ENCODE measurements at regions of chr6 and their contacts with region 1.

Region 1: GRCh38 chr6:136289579-136290409 is at the start of gene BCLAF1:
- DNase-seq: peak; percentile 98
- ATAC-seq: peak; percentile 80
- H3K4me3 Mint-ChIP-seq: peak within 1 kb of the TSS; percentile 100
- H3K27ac Mint-ChIP-seq: peak within 1 kb of the TSS; percentile 100
- H3K4me1 Mint-ChIP-seq: peaks cover 49% of the 10 kb centered on the region
- H3K27me3 Mint-ChIP-seq: no peaks in the 10 kb centered on the region
- CTCF ChIP-seq: no peak
- total RNA-seq, gene BCLAF1: 253 and 259 TPM in 2 replicates

Region 2: DNA sequence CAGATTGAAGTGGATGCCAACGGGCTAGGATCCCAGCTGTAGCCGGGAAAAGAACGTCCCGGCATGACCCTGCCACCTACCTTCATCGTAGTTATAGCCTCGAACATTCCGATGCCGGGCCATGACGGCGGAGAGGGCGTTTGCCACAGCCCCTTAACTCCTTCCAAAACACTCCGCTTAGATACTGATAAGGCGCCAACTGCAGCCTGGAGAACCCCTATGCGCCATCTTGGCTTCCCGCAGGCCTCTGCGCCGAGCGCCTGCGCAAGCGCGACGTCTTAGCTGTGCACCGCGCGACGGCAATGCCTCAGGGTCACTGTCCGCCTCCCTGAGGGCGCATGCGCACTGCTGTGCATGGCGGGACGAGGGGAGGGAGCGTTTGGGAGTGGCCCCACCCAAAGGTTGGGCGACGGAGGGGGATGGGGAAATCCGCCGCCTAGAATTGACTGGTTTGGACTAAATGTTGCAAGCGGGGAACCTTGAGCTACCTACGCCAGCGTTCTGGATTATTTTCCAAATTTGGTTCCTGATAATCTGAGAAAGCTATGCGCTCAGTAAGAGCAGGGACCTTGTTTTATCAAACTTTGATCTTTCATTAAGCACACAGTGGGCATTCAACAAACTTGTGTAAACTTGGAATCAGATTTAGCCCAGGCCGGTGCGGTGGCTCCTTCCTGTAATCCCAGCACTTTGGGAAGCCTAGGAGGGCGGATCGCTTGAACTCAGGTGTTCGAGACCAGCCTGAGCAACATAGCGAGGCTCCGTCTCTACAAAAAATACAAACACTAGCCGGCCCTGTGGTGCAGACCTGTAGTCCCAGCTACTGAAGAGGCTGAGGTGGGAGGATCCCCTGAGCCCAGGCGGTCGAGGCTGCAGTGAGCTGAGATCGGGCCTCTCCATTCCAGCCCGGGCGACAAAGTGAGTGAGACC is 1235.0 kb before region 1 on chr6 and contains the start of gene HBS1L:
- CTCF ChIA-PET with region 1: no interaction called
- POLR2A ChIA-PET with region 1: interaction called, 12 read pairs
- intact Hi-C with region 1: loop called (anchors 1 kb)
- DNase-seq: peak; percentile 94
- ATAC-seq: peak; percentile 98
- H3K4me3 Mint-ChIP-seq: peak within 1 kb of the TSS; percentile 98
- H3K27ac Mint-ChIP-seq: peak within 1 kb of the TSS; percentile 97
- H3K4me1 Mint-ChIP-seq: peaks cover 35% of the 10 kb centered on the region
- H3K27me3 Mint-ChIP-seq: no peaks in the 10 kb centered on the region
- CTCF ChIP-seq: no peak
- total RNA-seq, gene HBS1L: 60.2 and 67.5 TPM in 2 replicates

Region 3: GRCh38 chr6:136249811-136250685 is 39.7 kb before region 1 on chr6 and contains the start of gene MTFR2:
- CTCF ChIA-PET with region 1: interaction called, 4 read pairs
- POLR2A ChIA-PET with region 1: interaction called, 84 read pairs
- intact Hi-C with region 1: loop called (anchors 1 kb)
- DNase-seq: peak; percentile 74
- ATAC-seq: peak; percentile 97
- H3K4me3 Mint-ChIP-seq: peak within 1 kb of the TSS; percentile 89
- H3K27ac Mint-ChIP-seq: peak within 1 kb of the TSS; percentile 57
- H3K4me1 Mint-ChIP-seq: peaks cover 27% of the 10 kb centered on the region
- H3K27me3 Mint-ChIP-seq: no peaks in the 10 kb centered on the region
- CTCF ChIP-seq: no peak
- total RNA-seq, gene MTFR2: 2.5 and 3.5 TPM in 2 replicates

Region 4: GRCh38 chr6:136317021-136317694 is 27.4 kb after region 1 on chr6:
- CTCF ChIA-PET with region 1: interaction called, 18 read pairs
- POLR2A ChIA-PET with region 1: interaction called, 9 read pairs
- intact Hi-C with region 1: loop called (anchors 1 kb)
- DNase-seq: no peak
- ATAC-seq: peak; percentile 71
- H3K4me3 Mint-ChIP-seq: no peak overlapping the region
- H3K27ac Mint-ChIP-seq: no peak overlapping the region
- H3K4me1 Mint-ChIP-seq: no peaks in the 10 kb centered on the region
- H3K27me3 Mint-ChIP-seq: peaks cover 4% of the 10 kb centered on the region
- CTCF ChIP-seq: no peak

Region 5: GRCh38 chr6:136383268-136383937 is 93.6 kb after region 1 on chr6:
- CTCF ChIA-PET with region 1: no interaction called
- POLR2A ChIA-PET with region 1: no interaction called
- intact Hi-C with region 1: no loop called
- DNase-seq: no peak
- ATAC-seq: no peak
- H3K4me3 Mint-ChIP-seq: no peak overlapping the region
- H3K27ac Mint-ChIP-seq: no peak overlapping the region
- H3K4me1 Mint-ChIP-seq: no peaks in the 10 kb centered on the region
- H3K27me3 Mint-ChIP-seq: no peaks in the 10 kb centered on the region
- CTCF ChIP-seq: no peak

Region 6: GRCh38 chr6:136410201-136411027 is 120.6 kb after region 1 on chr6:
- CTCF ChIA-PET with region 1: no interaction called
- POLR2A ChIA-PET with region 1: no interaction called
- intact Hi-C with region 1: no loop called
- DNase-seq: no peak
- ATAC-seq: no peak
- H3K4me3 Mint-ChIP-seq: no peak overlapping the region
- H3K27ac Mint-ChIP-seq: no peak overlapping the region
- H3K4me1 Mint-ChIP-seq: peaks cover 6% of the 10 kb centered on the region
- H3K27me3 Mint-ChIP-seq: peaks cover 2% of the 10 kb centered on the region
- CTCF ChIP-seq: no peak

Region 7: DNA sequence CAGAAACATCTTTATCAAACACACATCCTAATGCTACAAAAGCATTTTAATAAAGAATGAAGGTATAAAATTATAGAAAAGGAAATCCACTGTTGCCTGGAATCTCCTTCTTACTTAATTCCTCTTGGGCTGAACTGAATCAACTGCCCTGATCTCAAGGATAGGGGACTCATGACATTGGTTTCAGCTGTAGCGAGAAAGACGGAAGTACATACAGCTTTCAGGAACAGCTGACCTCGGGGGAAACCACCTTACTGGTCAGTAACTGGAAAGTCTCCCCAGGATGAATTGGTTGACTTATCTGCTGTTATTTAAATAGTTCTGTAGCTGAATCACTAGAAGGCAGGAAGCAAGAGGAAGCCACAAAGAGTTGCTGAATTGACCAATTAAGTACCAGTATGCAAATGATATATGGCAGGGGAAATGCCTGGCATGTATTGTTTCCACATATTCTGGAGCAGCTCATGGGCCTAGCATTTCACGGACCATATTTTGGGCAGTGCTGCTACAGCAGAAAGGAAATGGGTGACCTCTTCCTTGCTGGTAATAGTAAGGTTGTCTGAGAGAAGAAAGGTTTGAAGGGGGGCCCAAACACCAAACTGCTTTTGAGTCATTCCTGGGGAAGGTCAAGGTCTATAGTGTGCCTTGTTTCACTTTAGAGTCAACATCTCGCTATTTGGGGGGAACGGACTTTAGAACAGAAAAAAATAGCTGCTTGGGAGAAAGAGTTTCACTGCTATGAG is 304.1 kb after region 1 on chr6:
- CTCF ChIA-PET with region 1: no interaction called
- POLR2A ChIA-PET with region 1: no interaction called
- intact Hi-C with region 1: loop called (anchors 1 kb)
- DNase-seq: no peak
- ATAC-seq: peak; percentile 94
- H3K4me3 Mint-ChIP-seq: peak overlapping the region; percentile 61
- H3K27ac Mint-ChIP-seq: peak overlapping the region; percentile 81
- H3K4me1 Mint-ChIP-seq: peaks cover 29% of the 10 kb centered on the region
- H3K27me3 Mint-ChIP-seq: no peaks in the 10 kb centered on the region
- CTCF ChIP-seq: no peak

Region 8: GRCh38 chr6:136822376-136823127 is 532.8 kb after region 1 on chr6 and contains the start of gene PEX7:
- CTCF ChIA-PET with region 1: no interaction called
- POLR2A ChIA-PET with region 1: interaction called, 12 read pairs
- intact Hi-C with region 1: loop called (anchors 1 kb)
- DNase-seq: peak; percentile 86
- ATAC-seq: peak; percentile 91
- H3K4me3 Mint-ChIP-seq: peak within 1 kb of the TSS; percentile 94
- H3K27ac Mint-ChIP-seq: peak within 1 kb of the TSS; percentile 98
- H3K4me1 Mint-ChIP-seq: peaks cover 16% of the 10 kb centered on the region
- H3K27me3 Mint-ChIP-seq: peaks cover 4% of the 10 kb centered on the region
- CTCF ChIP-seq: no peak
- total RNA-seq, gene PEX7: 5.0 and 6.8 TPM in 2 replicates